ENCODE measurements at regions of chr16 and their contacts with region 1.

Region 1: GRCh38 chr16:24776501-24777220 is 47.2 kb downstream of the TNRC6A start:
- DNase-seq: peak; percentile 73 to 75
- ATAC-seq: peak; percentile 93 to 96
- H3K4me3 ChIP-seq: peak overlapping the region in 1 of 4 donors; percentile 4
- H3K27ac ChIP-seq: peak overlapping the region; percentile 83 to 88 (median 86)
- H3K4me1 ChIP-seq: peaks cover 50 to 58% of the 10 kb centered on the region in 2 donors
- H3K27me3 ChIP-seq: no peaks in the 10 kb centered on the region
- CTCF ChIP-seq: no peak
- POLR2A ChIP-seq: no peak

Region 2: DNA sequence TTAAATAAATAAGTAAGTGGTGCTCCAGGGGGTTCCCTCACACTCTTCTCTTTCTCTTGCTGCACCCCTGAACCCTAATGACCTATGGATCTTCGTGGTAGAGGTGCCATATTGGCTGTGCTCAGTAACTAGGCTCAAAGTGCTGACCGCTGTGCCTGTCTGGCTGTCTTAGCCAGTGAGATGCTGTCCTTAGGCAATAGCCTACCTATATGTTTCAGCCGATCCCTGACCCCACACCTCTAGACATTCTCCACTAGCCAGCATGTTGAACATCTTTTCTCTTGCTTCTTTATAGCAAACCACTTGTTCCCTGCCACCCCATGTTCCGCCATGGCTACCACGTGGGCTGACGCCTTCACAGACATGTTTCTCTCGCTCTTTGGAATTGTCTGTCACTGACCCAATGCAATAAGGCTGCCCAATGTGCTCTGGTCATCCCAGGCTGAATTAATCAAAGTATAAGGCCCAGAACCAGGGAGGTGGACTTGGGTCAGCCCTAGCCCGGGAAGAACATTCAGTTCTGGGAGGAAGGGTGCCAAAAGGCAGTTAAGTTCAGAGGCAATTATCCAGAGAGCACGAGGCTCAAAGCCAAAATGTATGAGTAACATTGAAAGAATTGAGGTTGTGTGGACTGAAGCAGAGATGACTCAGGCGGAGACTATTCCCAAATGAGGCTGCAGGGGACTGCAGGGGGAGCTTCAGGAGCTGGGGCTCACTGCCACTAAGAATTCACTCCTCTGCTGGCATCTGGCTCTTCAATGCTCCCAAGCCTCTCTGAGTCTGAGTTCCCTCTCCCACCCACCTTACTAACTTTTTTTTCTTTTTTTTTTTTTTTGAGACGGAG is 75.9 kb before region 1 on chr16:
- in situ Hi-C with region 1: no loop called
- intact Hi-C with region 1: loop called (anchors 2 kb)
- DNase-seq: peak; percentile 86 to 92
- ATAC-seq: peak; percentile 99
- H3K4me3 ChIP-seq: peak overlapping the region in 3 of 4 donors; percentile 1 to 38 (median 27)
- H3K27ac ChIP-seq: peak overlapping the region; percentile 74 to 92 (median 85)
- H3K4me1 ChIP-seq: peaks cover 16 to 23% of the 10 kb centered on the region in 2 donors
- H3K27me3 ChIP-seq: no peaks in the 10 kb centered on the region
- CTCF ChIP-seq: peak in 3 of 5 experiments; percentile 31 to 43 (median 35)
- POLR2A ChIP-seq: no peak

Region 3: DNA sequence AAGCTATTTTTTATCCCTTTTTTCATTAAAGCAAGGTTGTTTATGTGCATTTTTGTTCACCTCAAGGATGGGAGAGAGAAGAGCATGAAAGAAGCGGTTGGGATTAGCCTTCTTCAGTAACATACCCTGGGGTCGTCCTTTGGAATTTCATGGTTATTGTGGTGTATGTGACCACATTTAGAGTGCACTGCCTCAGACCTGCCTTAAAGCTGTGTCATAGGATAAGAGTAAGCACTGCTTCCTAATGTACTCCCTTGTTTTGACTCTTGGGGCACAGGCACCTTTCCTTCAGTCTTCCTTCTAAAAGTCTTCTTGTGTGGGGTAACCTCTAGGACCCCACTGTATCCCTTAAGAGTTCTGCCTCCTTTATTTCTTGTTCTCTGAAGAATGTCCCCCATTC is 18.3 kb before region 1 on chr16:
- in situ Hi-C with region 1: no loop called
- intact Hi-C with region 1: no loop called
- DNase-seq: no peak
- ATAC-seq: no peak
- H3K4me3 ChIP-seq: no peak overlapping the region
- H3K27ac ChIP-seq: peak overlapping the region in 3 of 4 donors; percentile 24 to 90 (median 50)
- H3K4me1 ChIP-seq: peaks cover 42 to 51% of the 10 kb centered on the region in 2 donors
- H3K27me3 ChIP-seq: no peaks in the 10 kb centered on the region
- CTCF ChIP-seq: no peak
- POLR2A ChIP-seq: no peak

Region 4: GRCh38 chr16:24820522-24820921 is 43.9 kb after region 1 on chr16:
- in situ Hi-C with region 1: no loop called
- intact Hi-C with region 1: no loop called
- DNase-seq: no peak
- ATAC-seq: no peak
- H3K4me3 ChIP-seq: no peak overlapping the region
- H3K27ac ChIP-seq: peak overlapping the region in 1 of 4 donors; percentile 38
- H3K4me1 ChIP-seq: no peaks in the 10 kb centered on the region
- H3K27me3 ChIP-seq: no peaks in the 10 kb centered on the region
- CTCF ChIP-seq: no peak
- POLR2A ChIP-seq: no peak

Region 5: DNA sequence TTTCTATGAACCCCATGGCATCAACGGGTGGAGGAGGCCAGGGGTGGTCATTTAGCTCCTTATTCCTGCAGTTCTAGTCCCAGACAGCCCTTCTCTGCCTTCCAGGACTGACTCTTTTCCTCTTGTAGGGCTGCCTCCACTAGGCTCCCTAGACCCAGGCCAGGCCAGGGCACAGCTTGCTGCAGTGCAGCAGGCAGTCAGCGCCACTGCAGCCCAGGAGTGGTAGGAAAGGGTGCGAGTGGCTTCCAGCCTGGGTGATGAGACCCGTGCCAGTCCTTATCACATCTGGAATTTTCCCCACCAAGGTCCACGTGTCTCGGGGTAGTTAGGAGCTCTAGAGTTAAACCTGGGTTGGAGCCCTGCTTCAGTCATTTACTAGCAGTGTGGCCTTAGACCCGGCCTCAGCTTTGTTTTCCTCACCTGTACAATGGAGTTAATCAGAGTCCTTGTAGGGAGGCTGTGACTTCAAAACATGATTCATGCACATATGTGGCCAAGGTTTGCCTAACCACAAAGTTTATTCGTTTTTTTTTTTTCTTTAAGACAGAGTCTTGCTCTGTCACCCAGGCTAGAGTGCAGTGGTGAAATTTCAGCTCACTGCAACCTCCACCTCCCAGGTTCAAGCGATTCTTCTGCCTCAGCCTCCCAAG is 73.8 kb after region 1 on chr16:
- in situ Hi-C with region 1: no loop called
- intact Hi-C with region 1: no loop called
- DNase-seq: no peak
- ATAC-seq: no peak
- H3K4me3 ChIP-seq: no peak overlapping the region
- H3K27ac ChIP-seq: no peak overlapping the region
- H3K4me1 ChIP-seq: no peaks in the 10 kb centered on the region
- H3K27me3 ChIP-seq: no peaks in the 10 kb centered on the region
- CTCF ChIP-seq: no peak
- POLR2A ChIP-seq: no peak

Region 6: GRCh38 chr16:24988593-24989338 is 212.1 kb after region 1 on chr16:
- in situ Hi-C with region 1: no loop called
- intact Hi-C with region 1: no loop called
- DNase-seq: no peak
- ATAC-seq: peak in 1 of 2 donors; percentile 22
- H3K4me3 ChIP-seq: peak overlapping the region in 2 of 4 donors; percentile 1 to 27
- H3K27ac ChIP-seq: peak overlapping the region; percentile 76 to 89 (median 82)
- H3K4me1 ChIP-seq: peaks cover 93 to 95% of the 10 kb centered on the region in 2 donors
- H3K27me3 ChIP-seq: no peaks in the 10 kb centered on the region
- CTCF ChIP-seq: no peak
- POLR2A ChIP-seq: no peak

Measured in gastrocnemius medialis (tissue), 4 donors.